ENCODE measurements at regions of chr7 and their contacts with region 1.

Region 1: GRCh38 chr7:101815835-101816493 is 1.5 kb upstream of the CUX1 start:
- DNase-seq: peak; percentile 61 to 77 (median 73)
- ATAC-seq: peak; percentile 87
- H3K4me3 ChIP-seq: peak overlapping the region; percentile 47
- H3K4me3 Mint-ChIP-seq: peak overlapping the region; percentile 63 to 90 (median 84)
- H3K27ac ChIP-seq: peak overlapping the region; percentile 54
- H3K27ac Mint-ChIP-seq: peak overlapping the region in 5 of 9 donors; percentile 34 to 84 (median 67)
- H3K4me1 ChIP-seq: peaks cover 0 to 4% of the 10 kb centered on the region in 2 donors
- H3K4me1 Mint-ChIP-seq: peaks cover 12 to 47% (median 32%) of the 10 kb centered on the region in 7 donors
- H3K27me3 ChIP-seq: no peaks in the 10 kb centered on the region
- H3K27me3 Mint-ChIP-seq: peaks cover 0 to 46% (median 0%) of the 10 kb centered on the region in 5 donors

Region 2: GRCh38 chr7:101602484-101603241 is 213.3 kb before region 1 on chr7:
- CTCF ChIA-PET with region 1: no interaction called
- POLR2A ChIA-PET with region 1: no interaction called
- intact Hi-C with region 1: loop called (anchors 1 to 10 kb)
- DNase-seq: peak; percentile 32 to 70 (median 60)
- ATAC-seq: peak; percentile 84
- H3K4me3 ChIP-seq: no peak overlapping the region
- H3K4me3 Mint-ChIP-seq: peak overlapping the region in 1 of 10 donors; percentile 23
- H3K27ac ChIP-seq: no peak overlapping the region
- H3K27ac Mint-ChIP-seq: no peak overlapping the region
- H3K4me1 ChIP-seq: no peaks in the 10 kb centered on the region
- H3K4me1 Mint-ChIP-seq: peaks cover 0 to 1% (median 0%) of the 10 kb centered on the region in 7 donors
- H3K27me3 ChIP-seq: no peaks in the 10 kb centered on the region
- H3K27me3 Mint-ChIP-seq: peaks cover 0 to 4% (median 0%) of the 10 kb centered on the region in 5 donors

Region 3: DNA sequence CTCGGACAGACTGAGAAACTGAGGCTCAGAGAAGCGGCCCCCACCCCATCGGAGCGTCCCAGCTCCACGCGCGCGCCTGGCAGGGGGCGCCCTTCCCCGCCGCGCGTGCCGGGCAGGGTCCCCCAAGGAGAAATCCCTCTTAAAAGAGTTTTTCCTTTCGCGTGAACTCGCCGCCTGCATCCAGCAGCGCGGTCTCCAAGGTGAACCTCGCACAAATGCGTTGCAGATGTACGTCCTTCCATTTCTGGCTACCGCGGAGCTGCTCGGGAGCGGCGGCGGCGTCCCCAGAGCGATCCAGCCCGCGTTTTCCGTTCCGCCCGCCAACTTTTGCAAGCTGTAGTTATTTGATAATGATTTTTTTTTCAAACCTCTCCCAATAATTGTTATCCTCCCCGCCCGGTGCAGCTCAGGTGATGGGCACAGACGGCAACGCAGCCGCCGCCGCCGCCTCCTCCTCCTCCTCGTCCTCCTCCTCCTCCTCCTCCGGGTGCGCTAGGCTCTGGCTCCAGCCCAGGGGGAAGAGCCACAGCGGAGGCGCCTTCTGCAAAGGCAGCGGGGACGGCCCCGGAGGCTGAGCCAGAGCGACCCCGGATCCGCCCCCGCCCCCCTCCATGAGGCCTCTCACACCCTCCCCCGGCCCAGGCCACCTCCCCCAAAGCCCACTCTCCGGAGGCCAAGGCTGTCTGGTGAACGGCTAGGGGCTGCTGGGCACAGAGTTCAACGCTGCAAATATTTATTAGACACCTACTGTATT is 72.5 kb before region 1 on chr7:
- CTCF ChIA-PET with region 1: interaction called, 13 read pairs
- POLR2A ChIA-PET with region 1: interaction called, 8 read pairs
- intact Hi-C with region 1: loop called (anchors 1 kb)
- DNase-seq: peak; percentile 48 to 77 (median 68)
- ATAC-seq: peak; percentile 82
- H3K4me3 ChIP-seq: peak overlapping the region; percentile 59
- H3K4me3 Mint-ChIP-seq: peak overlapping the region; percentile 76 to 91 (median 84)
- H3K27ac ChIP-seq: no peak overlapping the region
- H3K27ac Mint-ChIP-seq: peak overlapping the region in 2 of 9 donors; percentile 28 to 73
- H3K4me1 ChIP-seq: peaks cover 0 to 17% of the 10 kb centered on the region in 2 donors
- H3K4me1 Mint-ChIP-seq: peaks cover 7 to 48% (median 22%) of the 10 kb centered on the region in 7 donors
- H3K27me3 ChIP-seq: no peaks in the 10 kb centered on the region
- H3K27me3 Mint-ChIP-seq: no peaks in the 10 kb centered on the region

Region 4: DNA sequence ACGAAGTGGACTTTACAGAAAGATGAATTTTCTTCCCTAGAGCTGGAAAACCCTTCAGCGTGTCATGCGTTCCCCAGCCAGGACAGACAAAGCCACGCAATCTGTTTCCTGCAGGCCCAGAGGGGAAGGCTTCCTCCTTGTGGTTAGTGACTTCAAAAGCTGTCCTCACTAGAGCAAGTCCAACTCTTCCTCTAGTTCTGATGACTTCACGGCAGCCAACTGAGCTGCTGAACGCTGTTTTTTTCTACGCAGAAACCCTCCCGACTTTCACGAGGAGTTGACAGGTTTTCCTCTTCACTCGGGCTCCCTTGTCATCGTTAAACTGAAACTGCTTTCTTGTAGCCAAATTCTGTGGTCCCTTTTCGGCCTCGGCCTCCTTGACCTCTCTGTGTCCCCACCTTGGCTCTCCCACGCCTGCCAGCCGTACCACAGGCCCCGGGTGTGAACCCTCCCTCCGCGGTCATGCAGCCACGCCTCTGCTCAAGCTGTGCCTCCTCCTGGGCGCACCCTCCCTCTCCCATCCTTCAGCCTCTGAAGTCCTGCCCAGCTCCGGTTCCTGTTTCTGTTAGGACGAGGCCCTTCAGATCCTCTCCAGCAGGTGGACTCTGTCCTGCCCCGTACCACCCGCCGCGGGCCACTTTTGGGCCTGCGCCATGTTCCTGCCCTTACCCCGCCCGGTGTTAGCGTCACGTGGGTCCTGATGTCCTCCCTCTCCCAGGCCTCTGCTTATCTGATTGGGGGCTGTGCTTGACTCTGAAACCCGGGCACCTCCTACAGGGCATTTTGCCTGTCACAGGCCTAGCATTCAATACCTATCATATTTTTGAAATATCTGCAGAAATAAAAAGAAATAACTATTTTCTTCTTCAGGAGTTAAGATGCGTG is 40.8 kb after region 1 on chr7:
- CTCF ChIA-PET with region 1: no interaction called
- POLR2A ChIA-PET with region 1: no interaction called
- intact Hi-C with region 1: loop called (anchors 1 kb)
- DNase-seq: peak; percentile 61 to 79 (median 75)
- ATAC-seq: peak; percentile 94
- H3K4me3 ChIP-seq: peak overlapping the region; percentile 76
- H3K4me3 Mint-ChIP-seq: peak overlapping the region; percentile 92 to 100 (median 98)
- H3K27ac ChIP-seq: peak overlapping the region; percentile 75
- H3K27ac Mint-ChIP-seq: peak overlapping the region; percentile 93 to 97 (median 96)
- H3K4me1 ChIP-seq: peaks cover 9 to 14% of the 10 kb centered on the region in 2 donors
- H3K4me1 Mint-ChIP-seq: peaks cover 38 to 68% (median 53%) of the 10 kb centered on the region in 7 donors
- H3K27me3 ChIP-seq: no peaks in the 10 kb centered on the region
- H3K27me3 Mint-ChIP-seq: peaks cover 0 to 3% (median 0%) of the 10 kb centered on the region in 5 donors

Region 5: GRCh38 chr7:102205915-102206314 is 390.0 kb after region 1 on chr7:
- CTCF ChIA-PET with region 1: no interaction called
- POLR2A ChIA-PET with region 1: no interaction called
- intact Hi-C with region 1: no loop called
- DNase-seq: no peak
- ATAC-seq: no peak
- H3K4me3 ChIP-seq: no peak overlapping the region
- H3K4me3 Mint-ChIP-seq: no peak overlapping the region
- H3K27ac ChIP-seq: no peak overlapping the region
- H3K27ac Mint-ChIP-seq: peak overlapping the region in 1 of 9 donors; percentile 63
- H3K4me1 ChIP-seq: no peaks in the 10 kb centered on the region
- H3K4me1 Mint-ChIP-seq: no peaks in the 10 kb centered on the region
- H3K27me3 ChIP-seq: no peaks in the 10 kb centered on the region
- H3K27me3 Mint-ChIP-seq: no peaks in the 10 kb centered on the region

Region 6: GRCh38 chr7:102236592-102237287 is 420.8 kb after region 1 on chr7:
- CTCF ChIA-PET with region 1: interaction called, 5 read pairs
- POLR2A ChIA-PET with region 1: no interaction called
- intact Hi-C with region 1: loop called in 1 of 2 experiments (anchors 2 kb)
- DNase-seq: peak in 8 of 9 donors; percentile 5 to 57 (median 32)
- ATAC-seq: peak; percentile 61
- H3K4me3 ChIP-seq: no peak overlapping the region
- H3K4me3 Mint-ChIP-seq: no peak overlapping the region
- H3K27ac ChIP-seq: no peak overlapping the region
- H3K27ac Mint-ChIP-seq: no peak overlapping the region
- H3K4me1 ChIP-seq: no peaks in the 10 kb centered on the region
- H3K4me1 Mint-ChIP-seq: peaks cover 0 to 4% (median 0%) of the 10 kb centered on the region in 7 donors
- H3K27me3 ChIP-seq: no peaks in the 10 kb centered on the region
- H3K27me3 Mint-ChIP-seq: no peaks in the 10 kb centered on the region

Region 7: DNA sequence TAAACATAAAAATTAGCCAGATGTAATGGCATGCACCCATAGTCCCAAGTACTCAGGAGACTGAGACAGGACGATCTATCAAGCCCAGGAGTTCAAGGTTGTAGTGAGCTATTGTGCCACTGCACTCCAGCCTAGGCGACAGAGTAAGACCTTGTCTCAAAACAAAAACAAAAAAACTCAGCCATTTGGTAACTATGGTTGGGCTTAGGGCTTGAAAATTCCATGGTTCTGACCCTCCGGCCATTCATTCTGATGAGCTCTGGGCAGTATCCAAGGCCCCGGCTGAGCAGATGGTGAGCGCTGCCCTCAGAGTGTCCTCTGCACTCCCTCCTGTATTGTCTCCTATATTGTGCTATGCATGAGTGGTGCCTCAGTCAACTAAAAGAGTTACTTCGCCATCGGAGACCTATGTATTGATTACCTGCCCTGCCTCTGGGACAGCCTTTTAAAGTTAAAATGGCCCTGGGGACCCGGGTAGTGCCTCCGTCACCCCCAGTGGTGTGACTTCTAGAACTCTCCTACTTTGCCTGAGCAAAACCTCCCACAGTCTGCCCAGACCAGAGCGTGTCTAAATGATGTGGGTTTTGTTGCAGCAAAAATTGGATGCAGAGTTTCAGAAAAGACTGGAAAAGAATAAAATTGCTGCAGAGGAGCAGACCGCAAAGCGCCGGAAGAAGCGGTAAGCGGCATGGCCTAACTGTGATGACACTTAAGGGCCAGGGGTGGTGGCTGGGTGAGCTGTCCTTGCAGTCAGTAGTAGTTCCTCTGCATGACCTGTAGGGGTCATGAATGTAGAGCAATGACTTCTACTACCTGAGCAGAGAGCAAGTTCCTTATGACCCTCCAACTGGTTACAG is 588.3 kb after region 1 on chr7:
- CTCF ChIA-PET with region 1: no interaction called
- POLR2A ChIA-PET with region 1: no interaction called
- intact Hi-C with region 1: no loop called
- DNase-seq: peak in 7 of 9 donors; percentile 48 to 71 (median 62)
- ATAC-seq: peak; percentile 100
- H3K4me3 ChIP-seq: no peak overlapping the region
- H3K4me3 Mint-ChIP-seq: no peak overlapping the region
- H3K27ac ChIP-seq: no peak overlapping the region
- H3K27ac Mint-ChIP-seq: peak overlapping the region in 5 of 9 donors; percentile 8 to 38 (median 25)
- H3K4me1 ChIP-seq: no peaks in the 10 kb centered on the region
- H3K4me1 Mint-ChIP-seq: peaks cover 0 to 14% (median 8%) of the 10 kb centered on the region in 7 donors
- H3K27me3 ChIP-seq: no peaks in the 10 kb centered on the region
- H3K27me3 Mint-ChIP-seq: no peaks in the 10 kb centered on the region